ENCODE measurements at regions of chr12 and their contacts with region 1.

Region 1: DNA sequence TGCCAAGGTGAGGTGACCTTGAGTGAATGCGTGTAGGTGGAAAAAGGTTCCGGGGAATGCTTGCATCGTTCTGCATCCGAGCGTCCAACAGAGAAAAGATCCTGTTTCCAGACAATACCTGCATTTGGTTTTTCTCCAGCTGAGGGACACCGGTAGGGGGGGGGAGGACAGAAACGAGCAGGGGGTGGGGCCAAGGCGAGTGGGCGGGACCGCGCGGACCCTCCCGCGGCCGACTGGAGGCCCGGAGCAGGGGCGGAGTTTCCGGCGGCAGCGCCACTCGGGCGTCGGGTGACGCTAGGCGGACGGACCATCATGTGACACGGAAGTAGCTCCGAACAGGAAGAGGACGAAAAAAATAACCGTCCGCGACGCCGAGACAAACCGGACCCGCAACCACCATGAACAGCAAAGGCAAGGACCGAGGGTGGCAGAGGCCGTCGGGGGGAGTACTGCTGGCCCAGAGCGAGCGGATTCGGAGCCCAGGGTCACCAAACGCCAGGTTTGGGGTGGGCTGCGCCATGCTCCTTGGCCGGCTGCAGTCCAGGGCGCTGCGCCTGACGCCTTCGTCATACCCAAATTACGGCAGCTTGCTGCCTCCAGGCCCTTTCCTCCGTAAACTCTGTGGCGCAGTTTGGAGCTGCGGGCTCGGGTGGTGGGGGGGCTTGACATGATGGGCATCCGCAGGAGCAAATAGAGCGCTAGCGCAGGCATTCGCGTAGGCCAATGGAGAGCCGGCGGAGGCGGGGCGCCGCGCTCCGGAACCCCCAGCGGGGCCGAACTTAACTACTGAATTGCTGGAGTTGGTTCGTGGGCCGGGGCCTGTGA is at the start of gene DAZAP2:
- DNase-seq: peak; percentile 76
- ATAC-seq: peak; percentile 93
- H3K4me3 ChIP-seq: peak within 1 kb of the TSS; percentile 80
- H3K27ac ChIP-seq: peak within 1 kb of the TSS; percentile 92
- H3K4me1 ChIP-seq: 0 out of 2 replicates have a peak, but pooled peaks cover 5% of the 10 kb centered on the region
- H3K27me3 ChIP-seq: no peaks in the 10 kb centered on the region
- CTCF ChIP-seq: no peak
- total RNA-seq, gene DAZAP2: 56.1 and 57.4 TPM in 2 replicates

Region 2: GRCh38 chr12:51351913-51352532 is 113.3 kb after region 1 on chr12:
- CTCF ChIA-PET with region 1: no interaction called
- POLR2A ChIA-PET with region 1: interaction called, 16 read pairs
- intact Hi-C with region 1: no loop called
- DNase-seq: peak; percentile 53
- ATAC-seq: peak; percentile 53
- H3K4me3 ChIP-seq: no peak overlapping the region
- H3K27ac ChIP-seq: no peak overlapping the region
- H3K4me1 ChIP-seq: no peaks in the 10 kb centered on the region
- H3K27me3 ChIP-seq: no peaks in the 10 kb centered on the region
- CTCF ChIP-seq: peak; percentile 67

Region 3: GRCh38 chr12:51381226-51382079 is 142.7 kb after region 1 on chr12:
- CTCF ChIA-PET with region 1: no interaction called
- POLR2A ChIA-PET with region 1: no interaction called
- intact Hi-C with region 1: no loop called
- DNase-seq: no peak
- ATAC-seq: no peak
- H3K4me3 ChIP-seq: no peak overlapping the region
- H3K27ac ChIP-seq: no peak overlapping the region
- H3K4me1 ChIP-seq: peaks cover 51% of the 10 kb centered on the region
- H3K27me3 ChIP-seq: no peaks in the 10 kb centered on the region
- CTCF ChIP-seq: no peak

Region 4: DNA sequence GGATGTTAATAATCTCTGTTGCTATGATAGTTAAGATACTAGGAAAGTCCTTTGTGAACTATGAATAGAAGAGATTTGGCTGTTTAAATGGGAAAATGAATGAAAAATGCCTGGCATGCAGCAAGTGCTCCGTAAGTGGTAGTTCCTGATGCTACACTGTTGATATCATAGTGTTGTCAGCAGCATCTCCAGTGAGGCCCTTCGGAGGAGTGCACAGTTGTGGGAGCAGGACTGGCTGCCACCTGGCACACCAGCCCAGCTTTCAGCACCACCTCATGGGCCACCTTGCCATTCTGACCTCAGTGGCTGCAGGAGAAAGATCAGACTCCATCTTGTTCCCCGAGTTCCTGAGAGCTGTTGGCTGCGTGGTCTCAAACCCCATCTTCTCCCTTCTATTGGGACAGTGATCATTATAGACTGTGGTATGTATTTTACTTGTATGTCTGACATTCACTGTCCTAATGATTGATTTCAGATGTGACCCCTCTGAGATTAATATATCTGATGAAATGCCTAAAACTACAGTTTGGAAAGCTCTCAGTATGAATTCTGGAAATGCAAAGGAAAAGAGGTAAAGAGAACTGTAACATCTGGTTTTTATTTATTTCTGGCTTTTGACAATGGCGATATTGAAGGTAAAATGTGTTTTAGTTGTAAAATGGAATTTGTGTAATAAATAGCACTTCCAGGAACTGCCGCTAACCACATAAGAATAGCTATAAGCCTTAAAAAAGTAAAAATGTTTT is 266.8 kb after region 1 on chr12:
- CTCF ChIA-PET with region 1: no interaction called
- POLR2A ChIA-PET with region 1: interaction called, 12 read pairs
- intact Hi-C with region 1: no loop called
- DNase-seq: no peak
- ATAC-seq: no peak
- H3K4me3 ChIP-seq: no peak overlapping the region
- H3K27ac ChIP-seq: no peak overlapping the region
- H3K4me1 ChIP-seq: no peaks in the 10 kb centered on the region
- H3K27me3 ChIP-seq: no peaks in the 10 kb centered on the region
- CTCF ChIP-seq: no peak

Measured in PC-3 (cell line).